ENCODE measurements at regions of chr6 and their contacts with region 1.

Region 1: GRCh38 chr6:170554013-170554795 is at the start of gene TBP:
- DNase-seq: peak; percentile 91
- ATAC-seq: peak; percentile 95
- H3K4me3 ChIP-seq: peak within 1 kb of the TSS; percentile 76
- H3K27ac ChIP-seq: peak within 1 kb of the TSS; percentile 90
- H3K4me1 ChIP-seq: peaks cover 3% of the 10 kb centered on the region; the same call in 1 of the 2 replicates
- H3K27me3 ChIP-seq: no peaks in the 10 kb centered on the region
- CTCF ChIP-seq: no peak
- EP300 ChIP-seq: peak in 1 of 2 experiments; percentile 63; a peak in 1 of 4 replicates
- POLR2A ChIP-seq: peak; percentile 81
- RAD21 ChIP-seq: no peak
- polyA plus RNA-seq, gene TBP: 26.0 to 35.5 TPM

Region 2: DNA sequence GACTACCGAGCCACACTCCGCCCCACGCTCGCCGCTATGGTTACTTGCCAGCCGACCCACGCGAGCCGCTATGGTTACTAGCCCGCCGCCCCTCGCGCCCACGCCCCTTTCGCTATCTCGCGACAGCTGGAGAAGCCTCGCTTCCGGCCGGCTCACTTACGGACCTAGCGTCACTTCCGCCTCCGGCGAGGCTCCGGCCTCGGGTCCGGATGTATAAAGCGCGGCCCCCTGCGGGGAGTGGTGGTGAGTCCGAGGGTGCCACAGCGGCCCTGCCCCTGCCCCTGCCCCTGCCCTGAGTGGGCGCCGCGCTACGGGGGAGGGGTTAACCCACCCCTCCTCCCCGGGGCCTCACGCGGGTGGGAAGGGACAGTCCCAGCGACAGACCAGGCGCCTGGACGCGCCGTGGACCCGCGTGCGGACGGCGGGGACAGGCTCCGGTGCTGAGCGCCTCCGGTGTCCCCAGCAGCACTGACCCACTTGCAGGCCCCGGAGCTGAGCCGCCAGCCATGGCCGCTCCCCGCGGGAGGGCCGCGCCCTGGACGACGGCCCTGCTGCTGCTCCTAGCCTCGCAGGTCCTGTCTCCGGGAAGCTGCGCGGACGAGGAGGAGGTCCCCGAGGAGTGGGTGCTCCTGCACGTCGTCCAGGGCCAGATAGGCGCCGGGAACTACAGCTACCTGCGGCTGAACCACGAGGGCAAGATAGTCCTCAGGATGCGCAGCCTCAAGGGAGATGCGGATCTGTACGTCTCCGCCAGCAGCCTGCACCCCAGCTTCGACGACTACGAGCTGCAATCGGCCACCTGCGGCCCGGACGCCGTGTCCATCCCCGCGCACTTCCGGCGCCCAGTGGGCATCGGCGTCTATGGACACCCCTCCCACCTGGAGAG is 852.0 kb before region 1 on chr6 and contains the starts of genes C6orf120 and WDR27:
- CTCF ChIA-PET with region 1: no interaction called
- POLR2A ChIA-PET with region 1: no interaction called
- RAD21 ChIA-PET with region 1: no interaction called
- SMC1A ChIA-PET with region 1: no interaction called
- in situ Hi-C with region 1: loop called (anchors 5 kb)
- intact Hi-C with region 1: loop called (anchors 5 kb)
- DNase-seq: peak; percentile 83
- ATAC-seq: peak; percentile 96
- H3K4me3 ChIP-seq: peak within 1 kb of the TSS; percentile 99
- H3K27ac ChIP-seq: peak within 1 kb of the TSS; percentile 78
- H3K4me1 ChIP-seq: peaks cover 7% of the 10 kb centered on the region
- H3K27me3 ChIP-seq: no peaks in the 10 kb centered on the region
- CTCF ChIP-seq: peak in 2 of 3 experiments; percentile 14 to 18; a peak in 1 of 6 replicates
- EP300 ChIP-seq: no peak
- POLR2A ChIP-seq: peak; percentile 98
- RAD21 ChIP-seq: no peak; the same call in 1 of the 2 replicates
- polyA plus RNA-seq, gene C6orf120: 3.6 to 6.2 TPM
- polyA plus RNA-seq, gene WDR27: 1.9 to 3.8 TPM

Region 3: DNA sequence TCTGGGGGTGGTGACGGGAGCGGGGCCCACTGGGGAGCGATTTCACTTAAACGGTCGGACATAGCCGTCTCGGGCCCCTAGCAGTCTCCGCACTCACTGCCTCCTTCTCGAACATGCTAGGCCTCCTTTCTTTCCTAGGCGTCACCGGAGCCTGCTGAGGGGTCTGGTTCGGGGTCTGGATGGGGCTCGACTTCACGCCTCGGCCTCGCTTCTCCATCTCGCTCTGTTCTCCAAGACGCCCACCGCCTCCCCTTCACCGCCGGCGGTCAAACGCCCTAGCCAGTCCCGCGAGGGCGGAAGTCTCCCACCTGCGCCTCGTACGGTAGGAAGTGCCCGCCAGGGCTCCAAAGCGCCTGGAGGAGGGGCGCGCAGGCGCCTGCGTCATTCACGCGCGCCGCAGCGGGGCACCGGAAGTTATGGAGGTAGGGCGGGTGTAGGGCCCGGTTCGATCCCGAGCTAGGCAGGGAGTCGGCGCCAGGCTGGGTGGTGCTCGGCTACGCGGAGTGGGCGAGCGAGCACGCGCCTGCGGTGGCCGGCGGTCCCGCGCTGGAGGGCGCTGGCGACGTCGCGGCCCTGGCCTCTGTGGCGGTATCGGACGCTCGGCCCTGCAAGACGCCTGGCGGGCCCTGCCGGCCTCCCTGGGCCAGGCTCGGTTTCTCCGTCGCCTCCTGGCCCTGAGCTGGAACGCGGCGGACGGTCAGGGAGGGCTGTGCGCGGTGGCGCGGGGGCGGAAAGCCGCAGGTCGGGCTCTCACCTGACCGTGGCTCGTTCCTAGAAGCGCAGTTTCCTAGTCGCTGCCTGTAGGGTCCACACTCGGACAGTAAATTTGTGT is 802.7 kb before region 1 on chr6 and contains the starts of genes DYNLT2 and ERMARD:
- CTCF ChIA-PET with region 1: no interaction called
- POLR2A ChIA-PET with region 1: interaction called, 5 read pairs
- RAD21 ChIA-PET with region 1: interaction called, 3 read pairs
- SMC1A ChIA-PET with region 1: no interaction called
- in situ Hi-C with region 1: loop called (anchors 5 kb)
- intact Hi-C with region 1: loop called (anchors 1 kb)
- DNase-seq: peak; percentile 69
- ATAC-seq: peak; percentile 96
- H3K4me3 ChIP-seq: peak within 1 kb of the TSS; percentile 97
- H3K27ac ChIP-seq: peak within 1 kb of the TSS; percentile 91
- H3K4me1 ChIP-seq: peaks cover 5% of the 10 kb centered on the region; the same call in 1 of the 2 replicates
- H3K27me3 ChIP-seq: no peaks in the 10 kb centered on the region
- CTCF ChIP-seq: no peak
- EP300 ChIP-seq: peak in 1 of 2 experiments; percentile 27; a peak in 1 of 4 replicates
- POLR2A ChIP-seq: peak; percentile 99
- RAD21 ChIP-seq: no peak
- polyA plus RNA-seq, gene DYNLT2: 2.2 to 3.0 TPM
- polyA plus RNA-seq, gene ERMARD: 43.7 to 63.3 TPM

Region 4: GRCh38 chr6:170584181-170584953 is 30.2 kb after region 1 on chr6 and contains the start of gene PDCD2:
- CTCF ChIA-PET with region 1: interaction called, 6 read pairs
- POLR2A ChIA-PET with region 1: interaction called, 4 read pairs
- RAD21 ChIA-PET with region 1: interaction called, 7 read pairs
- SMC1A ChIA-PET with region 1: interaction called, 8 read pairs
- in situ Hi-C with region 1: no loop called
- intact Hi-C with region 1: loop called (anchors 1 kb)
- DNase-seq: peak; percentile 54
- ATAC-seq: peak; percentile 97
- H3K4me3 ChIP-seq: peak within 1 kb of the TSS; percentile 100
- H3K27ac ChIP-seq: peak within 1 kb of the TSS; percentile 66
- H3K4me1 ChIP-seq: peaks cover 6% of the 10 kb centered on the region; the same call in 1 of the 2 replicates
- H3K27me3 ChIP-seq: no peaks in the 10 kb centered on the region
- CTCF ChIP-seq: no peak
- EP300 ChIP-seq: no peak
- POLR2A ChIP-seq: peak; percentile 93
- RAD21 ChIP-seq: no peak
- polyA plus RNA-seq, gene PDCD2: 27.4 to 57.3 TPM